ENCODE measurements at regions of chr15 and their contacts with region 1.

Region 1: GRCh38 chr15:25019434-25019833 is 64.6 kb downstream of the SNRPN start:
- DNase-seq: no peak
- H3K4me3 ChIP-seq: no peak overlapping the region
- H3K27ac ChIP-seq: no peak overlapping the region
- H3K4me1 ChIP-seq: no peaks in the 10 kb centered on the region
- H3K27me3 ChIP-seq: no peaks in the 10 kb centered on the region
- CTCF ChIP-seq: no peak
- POLR2A ChIP-seq: no peak

Region 2: DNA sequence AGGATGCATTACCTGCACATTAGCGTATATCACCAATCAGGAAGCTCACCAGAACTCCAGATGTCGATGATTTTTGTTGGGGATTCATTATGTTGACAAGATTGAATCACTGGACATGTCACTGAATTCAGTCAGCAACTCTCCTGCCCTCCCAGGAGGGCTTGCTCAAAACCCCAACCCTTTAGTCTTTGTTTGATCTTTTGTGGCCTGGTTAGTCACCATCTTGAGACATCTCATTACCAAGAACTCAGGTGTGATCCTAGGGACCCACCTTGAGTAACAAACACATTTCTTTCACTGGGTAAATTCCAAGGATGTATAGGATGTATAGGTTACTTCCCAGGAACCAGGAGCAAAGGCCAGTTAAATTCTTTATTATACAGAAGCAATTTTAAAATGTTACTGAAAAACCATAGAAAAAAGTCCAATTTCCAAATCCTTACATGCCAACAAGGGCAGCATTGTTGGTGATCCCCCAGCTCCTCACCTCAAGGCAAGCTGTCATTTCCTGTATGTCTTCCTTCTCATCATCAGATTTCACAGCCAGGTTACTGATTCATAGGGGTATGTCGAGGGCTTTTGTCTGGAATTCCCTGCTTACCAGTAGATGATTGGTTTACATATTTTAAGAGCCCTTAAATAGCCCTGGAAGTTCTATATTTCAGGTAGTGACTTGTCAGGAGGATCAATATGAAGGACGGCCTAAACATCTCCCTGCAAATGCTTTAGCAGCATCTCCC is 52.9 kb before region 1 on chr15:
- intact Hi-C with region 1: no loop called
- DNase-seq: no peak
- H3K4me3 ChIP-seq: no peak overlapping the region
- H3K27ac ChIP-seq: no peak overlapping the region
- H3K4me1 ChIP-seq: no peaks in the 10 kb centered on the region
- H3K27me3 ChIP-seq: no peaks in the 10 kb centered on the region
- CTCF ChIP-seq: no peak
- POLR2A ChIP-seq: no peak

Region 3: DNA sequence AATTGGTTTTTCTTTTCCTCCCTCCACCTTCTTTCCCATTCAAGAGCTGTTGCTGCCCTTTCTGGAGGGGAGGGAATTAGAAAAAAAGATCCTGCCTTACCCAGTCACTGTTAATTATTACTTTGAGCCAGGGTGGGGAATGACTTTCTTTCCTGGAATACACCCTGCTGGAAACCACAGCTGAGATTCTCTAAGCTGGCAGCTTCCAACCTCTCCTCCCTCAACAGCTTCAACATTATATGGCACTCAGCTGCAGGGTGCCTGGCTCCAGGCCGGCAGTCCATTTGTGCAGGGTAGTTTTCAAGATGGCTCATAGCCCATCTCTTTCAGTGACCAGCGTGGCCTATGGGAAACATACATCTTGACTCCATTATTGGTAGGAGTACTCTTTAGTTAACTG is 313.6 kb after region 1 on chr15:
- intact Hi-C with region 1: no loop called
- DNase-seq: no peak
- H3K4me3 ChIP-seq: no peak overlapping the region
- H3K27ac ChIP-seq: no peak overlapping the region
- H3K4me1 ChIP-seq: no peaks in the 10 kb centered on the region
- H3K27me3 ChIP-seq: no peaks in the 10 kb centered on the region
- CTCF ChIP-seq: no peak
- POLR2A ChIP-seq: no peak

Region 4: GRCh38 chr15:26222781-26223180 is 1203.3 kb after region 1 on chr15:
- intact Hi-C with region 1: loop called (anchors 5 kb)
- DNase-seq: no peak
- H3K4me3 ChIP-seq: no peak overlapping the region
- H3K27ac ChIP-seq: no peak overlapping the region
- H3K4me1 ChIP-seq: no peaks in the 10 kb centered on the region
- H3K27me3 ChIP-seq: no peaks in the 10 kb centered on the region
- CTCF ChIP-seq: no peak
- POLR2A ChIP-seq: no peak

Measured in breast epithelium (tissue), 4 donors.